IMR-90 (cell line): ENCODE measurements at regions of chr6 and their contacts with region 1.

Region 1: DNA sequence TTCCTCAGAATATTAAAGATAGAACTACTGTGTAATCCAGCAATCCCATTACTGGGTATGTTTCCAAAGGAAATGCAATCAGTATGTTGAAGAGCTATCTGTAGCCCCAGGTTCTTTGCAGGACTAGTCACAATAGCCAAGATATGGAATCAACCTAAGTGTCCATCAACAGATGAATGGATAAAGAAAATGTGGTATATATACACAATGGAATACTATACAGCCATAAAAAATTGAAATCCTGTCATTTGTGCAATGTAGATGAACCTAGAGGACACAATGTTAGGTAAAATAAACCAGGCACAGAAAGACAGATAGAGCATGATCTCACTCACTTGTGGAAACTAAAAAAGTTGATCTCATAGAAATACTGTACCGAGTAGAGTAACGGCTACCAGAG is 306.0 kb upstream of the MARCKS start:
- DNase-seq: no peak
- ATAC-seq: no peak
- H3K4me3 ChIP-seq: no peak overlapping the region
- H3K27ac ChIP-seq: no peak overlapping the region
- H3K4me1 ChIP-seq: no peaks in the 10 kb centered on the region
- H3K27me3 ChIP-seq: no peaks in the 10 kb centered on the region
- CTCF ChIP-seq: no peak
- POLR2A ChIP-seq: no peak
- RAD21 ChIP-seq: no peak

Region 2: DNA sequence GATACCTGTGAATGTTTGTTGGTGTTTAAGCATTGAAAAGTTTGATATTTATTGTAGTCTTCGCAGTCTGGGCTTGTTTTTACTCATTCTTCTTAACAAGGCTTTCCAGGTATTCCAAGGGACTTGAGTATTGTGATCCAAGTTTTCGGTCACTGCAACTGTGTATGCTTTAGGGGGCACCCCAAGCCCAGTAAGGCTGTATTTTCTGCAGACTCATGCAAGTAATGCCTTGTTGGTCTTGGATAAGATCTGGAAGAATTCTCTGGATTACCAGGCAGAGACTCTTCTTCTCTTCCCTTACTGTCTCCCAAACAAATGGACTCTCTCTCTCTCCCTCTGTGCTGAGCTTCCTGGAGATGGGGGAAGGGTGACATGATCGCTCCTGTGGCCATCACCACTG is 1121.9 kb before region 1 on chr6:
- CTCF ChIA-PET with region 1: no interaction called
- POLR2A ChIA-PET with region 1: no interaction called
- dilution Hi-C with region 1: no loop called
- in situ Hi-C with region 1: no loop called
- intact Hi-C with region 1: no loop called
- DNase-seq: peak; percentile 53
- ATAC-seq: peak; percentile 57
- H3K4me3 ChIP-seq: no peak overlapping the region
- H3K27ac ChIP-seq: no peak overlapping the region
- H3K4me1 ChIP-seq: no peaks in the 10 kb centered on the region; the same call in 1 of the 2 replicates
- H3K27me3 ChIP-seq: no peaks in the 10 kb centered on the region
- CTCF ChIP-seq: peak; percentile 47
- POLR2A ChIP-seq: no peak
- RAD21 ChIP-seq: peak; percentile 53

Region 3: DNA sequence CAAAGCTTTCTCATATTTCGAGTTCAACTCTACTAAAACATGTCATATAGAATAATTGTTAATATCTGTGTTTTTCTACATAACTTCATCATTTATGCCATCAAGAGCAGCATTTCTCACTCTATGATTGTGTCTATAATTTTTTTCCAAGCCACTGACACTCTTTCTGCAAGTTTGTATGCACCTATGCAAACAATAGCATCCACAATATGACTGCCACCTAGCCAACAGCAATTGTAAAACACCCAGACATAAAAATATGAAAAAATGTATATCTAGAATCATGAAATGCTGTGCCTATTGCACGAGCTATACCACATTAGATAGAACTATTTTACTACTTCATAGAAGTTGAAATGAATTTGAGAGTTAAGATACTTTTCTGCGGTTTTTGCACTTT is 19.5 kb after region 1 on chr6:
- CTCF ChIA-PET with region 1: no interaction called
- POLR2A ChIA-PET with region 1: interaction called, 4 read pairs
- dilution Hi-C with region 1: no loop called
- in situ Hi-C with region 1: no loop called
- intact Hi-C with region 1: loop called (anchors 1 kb)
- DNase-seq: no peak
- ATAC-seq: no peak
- H3K4me3 ChIP-seq: no peak overlapping the region
- H3K27ac ChIP-seq: no peak overlapping the region
- H3K4me1 ChIP-seq: no peaks in the 10 kb centered on the region
- H3K27me3 ChIP-seq: no peaks in the 10 kb centered on the region
- CTCF ChIP-seq: no peak
- POLR2A ChIP-seq: no peak
- RAD21 ChIP-seq: no peak

Region 4: DNA sequence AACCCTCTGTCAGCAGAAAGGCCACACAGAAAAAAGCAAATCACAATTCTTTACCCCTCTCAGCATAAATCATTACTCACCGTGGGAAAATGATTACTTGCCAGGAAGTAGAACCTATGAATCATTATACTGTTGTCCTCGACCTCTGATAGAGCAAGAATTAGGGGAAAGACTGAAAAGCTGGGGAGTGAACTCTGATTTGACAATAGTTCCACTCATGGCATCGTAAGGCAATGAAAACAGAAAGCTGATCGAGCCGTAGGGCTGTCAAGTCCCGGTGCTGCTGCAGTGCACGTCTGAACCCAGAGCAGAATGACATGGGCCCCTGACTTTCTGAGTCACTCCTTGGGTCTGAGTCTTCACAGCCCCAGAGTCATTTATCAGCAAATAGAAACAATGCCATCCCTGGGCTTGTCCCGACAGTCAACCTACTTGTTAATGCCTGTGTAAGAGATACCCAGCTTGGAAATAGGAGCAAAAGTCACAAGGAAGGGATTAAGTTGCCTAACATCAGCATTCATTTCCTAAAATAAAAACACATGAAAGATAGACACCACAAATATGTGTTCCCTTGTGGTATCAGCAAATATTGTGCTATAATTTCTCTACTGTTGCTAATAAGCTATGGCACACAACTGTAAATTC is 81.2 kb after region 1 on chr6:
- CTCF ChIA-PET with region 1: no interaction called
- POLR2A ChIA-PET with region 1: no interaction called
- dilution Hi-C with region 1: no loop called
- in situ Hi-C with region 1: no loop called
- intact Hi-C with region 1: no loop called
- DNase-seq: peak; percentile 88
- ATAC-seq: peak; percentile 62
- H3K4me3 ChIP-seq: peak overlapping the region; percentile 32; the same call in 1 of the 2 replicates
- H3K27ac ChIP-seq: peak overlapping the region; percentile 63
- H3K4me1 ChIP-seq: peaks cover 25% of the 10 kb centered on the region
- H3K27me3 ChIP-seq: no peaks in the 10 kb centered on the region
- CTCF ChIP-seq: no peak
- POLR2A ChIP-seq: peak; percentile 50; the same call in 1 of the 2 replicates
- RAD21 ChIP-seq: 0 out of 2 replicates have a peak, but pooled peaks have one; percentile 11